Sigmoid colon (tissue), 7 donors: ENCODE measurements at regions of chrX and their contacts with region 1.

Region 1: DNA sequence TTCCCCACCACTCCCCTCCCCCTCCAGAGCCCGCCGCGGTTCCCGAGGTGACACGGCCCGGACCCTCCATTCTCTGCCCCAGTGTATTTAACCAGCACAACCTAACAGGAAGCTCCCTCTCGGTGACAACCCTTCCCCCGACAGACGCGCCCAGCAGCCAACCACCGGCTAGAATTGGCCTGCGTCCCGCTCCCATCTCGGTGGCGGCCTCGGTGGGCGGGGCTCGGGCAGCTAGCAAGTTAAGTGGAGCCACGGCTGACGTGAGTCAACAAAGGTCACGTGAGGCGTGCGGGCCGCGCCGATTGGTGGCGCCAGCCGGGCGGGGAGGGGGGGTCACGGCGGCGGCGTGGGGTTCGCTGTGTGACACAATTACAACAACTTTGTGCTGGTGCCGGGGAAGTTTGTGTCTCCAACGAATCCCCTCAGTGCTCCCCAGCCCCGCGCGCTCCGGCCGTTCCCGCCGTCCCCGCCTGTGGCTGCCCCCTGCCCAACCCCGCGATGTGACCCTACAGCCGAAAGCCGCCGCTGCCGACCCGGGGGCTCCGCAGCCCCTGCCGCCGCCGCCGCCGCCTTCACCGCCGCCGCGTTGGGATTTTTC is at the start of gene KDM6A:
- DNase-seq: peak; percentile 100
- H3K4me3 ChIP-seq: peak within 1 kb of the TSS; percentile 75 to 100 (median 86)
- H3K27ac ChIP-seq: peak within 1 kb of the TSS; percentile 97 to 100 (median 99)
- H3K4me1 ChIP-seq: peaks cover 0 to 33% (median 6%) of the 10 kb centered on the region in 4 donors
- H3K27me3 ChIP-seq: no peaks in the 10 kb centered on the region
- CTCF ChIP-seq: no peak
- EP300 ChIP-seq: no peak
- POLR2A ChIP-seq: peak in 1 of 2 donors; percentile 52
- total RNA-seq, gene KDM6A: 17.9 to 35.7 (median 25.6) TPM

Region 2: DNA sequence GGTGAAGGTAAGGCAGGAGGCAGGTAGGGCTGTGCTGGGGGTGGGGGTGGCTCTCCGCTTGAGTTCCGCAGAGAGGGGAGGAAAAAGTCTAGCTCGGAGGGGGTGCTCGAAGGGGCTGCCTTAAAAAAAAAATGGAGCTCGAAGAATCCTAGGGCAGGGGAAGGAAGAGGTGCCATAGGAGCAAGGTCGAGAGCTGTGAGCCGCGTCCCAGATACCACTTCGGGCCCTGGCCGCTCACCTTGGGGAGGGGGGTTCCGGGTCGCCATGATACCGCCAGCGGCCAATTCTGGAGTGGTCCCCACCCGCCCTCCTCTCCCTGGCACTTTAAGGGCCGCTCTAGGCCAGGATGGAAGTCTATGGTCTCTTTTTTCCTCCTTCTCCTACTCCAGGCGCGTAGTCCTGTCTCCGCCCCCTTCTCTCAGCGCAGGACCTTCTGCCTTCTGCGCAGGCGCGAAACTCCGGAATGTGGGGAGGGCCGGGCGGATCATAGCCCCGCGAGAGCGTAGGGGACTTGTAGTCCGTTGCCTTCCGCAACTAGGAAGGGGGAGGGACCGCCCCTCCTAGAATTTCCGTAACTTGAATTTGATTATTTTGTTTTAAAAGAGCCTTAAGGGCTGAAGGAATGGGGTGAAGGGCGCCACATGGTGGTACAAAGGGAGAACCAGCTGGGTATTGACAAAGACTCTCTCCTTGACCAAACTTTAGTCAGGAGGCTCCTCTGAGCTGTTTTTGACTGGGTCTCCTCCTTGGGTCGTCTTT is 330.2 kb before region 1 on chrX and contains the start of gene FUNDC1:
- intact Hi-C with region 1: loop called (anchors 2 kb)
- DNase-seq: peak; percentile 96
- H3K4me3 ChIP-seq: peak within 1 kb of the TSS; percentile 59 to 75 (median 67)
- H3K27ac ChIP-seq: peak within 1 kb of the TSS; percentile 68 to 83 (median 80)
- H3K4me1 ChIP-seq: peaks cover 0 to 10% (median 0%) of the 10 kb centered on the region in 4 donors
- H3K27me3 ChIP-seq: no peaks in the 10 kb centered on the region
- CTCF ChIP-seq: peak in 1 of 4 experiments; percentile 18
- EP300 ChIP-seq: no peak
- POLR2A ChIP-seq: no peak
- total RNA-seq, gene FUNDC1: 5.5 to 13.8 (median 9.4) TPM

Region 3: GRCh38 chrX:44731160-44731559 is 141.8 kb before region 1 on chrX:
- intact Hi-C with region 1: no loop called
- DNase-seq: no peak
- H3K4me3 ChIP-seq: no peak overlapping the region
- H3K27ac ChIP-seq: no peak overlapping the region
- H3K4me1 ChIP-seq: no peaks in the 10 kb centered on the region
- H3K27me3 ChIP-seq: no peaks in the 10 kb centered on the region
- CTCF ChIP-seq: no peak
- EP300 ChIP-seq: no peak
- POLR2A ChIP-seq: no peak

Region 4: GRCh38 chrX:44997888-44998287 is 125.0 kb after region 1 on chrX:
- intact Hi-C with region 1: no loop called
- DNase-seq: no peak
- H3K4me3 ChIP-seq: no peak overlapping the region
- H3K27ac ChIP-seq: no peak overlapping the region
- H3K4me1 ChIP-seq: peaks cover 0 to 29% (median 5%) of the 10 kb centered on the region in 4 donors
- H3K27me3 ChIP-seq: no peaks in the 10 kb centered on the region
- CTCF ChIP-seq: no peak
- EP300 ChIP-seq: no peak
- POLR2A ChIP-seq: no peak

Region 5: GRCh38 chrX:45070116-45071007 is 197.4 kb after region 1 on chrX:
- intact Hi-C with region 1: loop called (anchors 2 kb)
- DNase-seq: no peak
- H3K4me3 ChIP-seq: no peak overlapping the region
- H3K27ac ChIP-seq: no peak overlapping the region
- H3K4me1 ChIP-seq: no peaks in the 10 kb centered on the region
- H3K27me3 ChIP-seq: no peaks in the 10 kb centered on the region
- CTCF ChIP-seq: peak in 3 of 4 experiments; percentile 12 to 40 (median 32)
- EP300 ChIP-seq: no peak
- POLR2A ChIP-seq: no peak

Region 6: GRCh38 chrX:45134315-45134731 is 261.4 kb after region 1 on chrX:
- intact Hi-C with region 1: loop called (anchors 2 kb)
- DNase-seq: no peak
- H3K4me3 ChIP-seq: no peak overlapping the region
- H3K27ac ChIP-seq: peak overlapping the region; percentile 8 to 57 (median 54)
- H3K4me1 ChIP-seq: peaks cover 0 to 7% (median under 1%) of the 10 kb centered on the region in 4 donors
- H3K27me3 ChIP-seq: no peaks in the 10 kb centered on the region
- CTCF ChIP-seq: no peak
- EP300 ChIP-seq: no peak
- POLR2A ChIP-seq: no peak